ENCODE measurements at regions of chr1 and their contacts with region 1.

Region 1: GRCh38 chr1:27111626-27112573 is 43.0 kb downstream of the SLC9A1 start:
- DNase-seq: peak; percentile 66
- ATAC-seq: peak; percentile 96
- H3K4me3 Mint-ChIP-seq: peak overlapping the region; percentile 59
- H3K27ac Mint-ChIP-seq: peak overlapping the region; percentile 94
- H3K4me1 Mint-ChIP-seq: peaks cover 60% of the 10 kb centered on the region
- H3K27me3 Mint-ChIP-seq: no peaks in the 10 kb centered on the region

Region 2: DNA sequence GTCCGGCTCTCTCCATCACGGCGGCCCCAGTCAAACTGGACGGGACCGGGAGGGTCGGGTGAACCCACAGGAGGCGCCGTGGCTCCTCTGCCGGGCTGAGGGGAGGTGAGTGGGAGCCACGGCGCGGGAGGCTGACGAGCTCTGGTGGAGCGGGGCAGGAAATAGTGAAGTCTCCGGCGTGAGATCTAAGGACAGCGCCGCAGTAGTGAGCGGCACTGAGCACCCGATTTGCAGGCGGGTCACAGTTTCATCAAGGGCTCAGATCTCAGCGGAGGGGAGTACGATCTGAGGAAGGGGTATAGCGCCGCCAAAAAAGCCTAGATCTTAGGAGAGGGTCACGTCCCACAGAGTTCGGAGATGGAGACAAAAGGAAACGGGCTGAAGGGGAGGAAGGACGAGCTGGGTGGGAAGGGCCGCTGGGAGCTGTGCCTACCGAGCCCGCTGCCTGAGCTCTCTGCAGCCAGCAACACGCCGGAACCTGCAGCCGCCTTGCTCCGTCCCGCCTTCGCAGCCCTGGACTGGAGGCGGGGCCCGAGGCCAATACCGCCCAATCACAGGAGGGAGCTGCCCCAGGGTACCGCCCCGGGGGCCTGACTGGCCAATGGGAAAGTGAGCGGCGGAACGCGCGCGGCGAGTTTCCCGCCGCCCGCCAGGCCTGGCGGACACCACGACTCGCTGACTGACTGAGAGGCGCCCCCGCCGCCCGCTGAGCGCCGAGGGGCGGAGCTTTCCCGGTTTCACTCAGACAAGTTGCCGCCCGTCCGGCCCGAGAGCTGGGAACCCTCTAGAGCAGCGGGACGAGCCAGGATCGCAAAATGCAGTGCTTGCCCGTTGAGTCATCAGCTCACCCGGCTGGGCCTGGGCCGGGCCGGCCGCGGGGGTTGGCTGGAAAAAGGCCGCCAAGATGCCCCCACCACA is 247.0 kb before region 1 on chr1:
- POLR2A ChIA-PET with region 1: no interaction called
- DNase-seq: peak; percentile 97
- ATAC-seq: peak; percentile 93
- H3K4me3 Mint-ChIP-seq: peak overlapping the region; percentile 96
- H3K27ac Mint-ChIP-seq: peak overlapping the region; percentile 95
- H3K4me1 Mint-ChIP-seq: peaks cover 14% of the 10 kb centered on the region
- H3K27me3 Mint-ChIP-seq: no peaks in the 10 kb centered on the region

Region 3: DNA sequence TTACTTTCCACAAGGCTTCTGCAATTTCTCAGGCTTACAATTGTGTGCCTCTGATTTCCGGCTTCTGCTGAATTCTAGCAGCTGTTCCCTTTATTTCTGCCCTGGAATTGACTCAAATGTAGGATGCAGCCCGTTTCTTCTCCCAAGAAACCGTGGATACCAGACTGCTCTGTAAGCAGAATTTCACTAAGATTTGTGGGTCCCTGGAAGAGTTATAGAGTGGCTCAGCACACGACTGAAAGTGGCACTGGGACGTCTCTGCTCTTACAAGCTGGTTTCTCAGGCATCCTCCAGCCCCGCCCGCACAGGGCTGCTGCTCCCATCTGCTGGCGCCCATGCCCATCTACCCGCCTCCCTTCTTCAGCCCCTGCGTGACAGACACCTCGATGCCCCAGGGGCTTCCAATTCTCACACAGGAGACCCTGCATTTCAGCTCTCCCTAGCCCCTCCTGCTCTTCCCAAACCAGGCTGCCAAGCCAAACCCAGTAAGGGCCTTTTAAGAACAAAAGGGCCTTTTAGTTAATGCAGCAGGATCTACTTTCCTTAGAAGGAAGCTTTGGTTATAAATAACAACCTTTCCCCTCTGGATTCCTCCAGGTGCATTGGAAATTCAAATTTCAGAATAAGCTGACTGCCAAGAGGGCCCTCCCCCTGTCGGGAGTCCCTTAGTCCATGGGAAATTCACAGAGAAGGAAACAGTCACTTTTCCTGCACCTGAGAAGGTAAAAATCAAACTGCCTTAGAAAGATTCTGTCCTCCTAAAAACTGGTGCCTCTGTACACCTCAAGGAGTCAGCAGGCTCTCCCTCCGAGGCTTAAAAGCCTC is 53.9 kb before region 1 on chr1:
- POLR2A ChIA-PET with region 1: no interaction called
- DNase-seq: no peak
- ATAC-seq: no peak
- H3K4me3 Mint-ChIP-seq: no peak overlapping the region
- H3K27ac Mint-ChIP-seq: no peak overlapping the region
- H3K4me1 Mint-ChIP-seq: no peaks in the 10 kb centered on the region
- H3K27me3 Mint-ChIP-seq: no peaks in the 10 kb centered on the region

Region 4: DNA sequence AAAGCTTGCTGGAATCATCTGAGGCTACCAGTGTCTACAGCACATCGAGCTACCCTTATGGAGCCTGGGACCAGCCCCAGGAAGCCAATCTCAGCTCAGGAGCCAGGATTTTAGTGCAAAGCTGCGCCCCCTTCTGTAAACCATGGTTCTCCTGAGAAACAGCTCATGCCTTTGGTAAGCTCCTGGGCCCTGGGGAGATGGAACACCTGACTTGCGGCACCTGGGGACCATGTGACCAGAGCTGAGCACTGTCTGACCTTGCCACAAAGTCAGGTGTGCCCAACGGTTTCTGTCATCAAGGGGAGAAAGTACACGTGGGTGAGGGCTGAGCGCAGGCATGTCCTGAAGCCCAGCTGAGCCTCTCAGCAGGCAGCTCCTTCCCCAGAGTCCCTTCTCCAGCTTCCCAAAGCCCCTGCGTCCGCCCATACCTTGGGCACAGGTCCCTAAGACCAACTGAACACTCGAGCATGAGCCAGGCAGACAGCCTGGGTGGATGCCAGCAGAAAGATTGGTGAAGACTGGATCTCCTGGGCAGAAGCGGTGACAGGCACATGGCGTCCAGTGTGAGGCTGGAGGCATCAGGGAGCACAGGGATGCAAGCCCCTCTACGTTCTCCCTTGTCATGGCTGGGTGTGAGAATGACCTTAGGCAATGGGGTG is 41.4 kb before region 1 on chr1:
- POLR2A ChIA-PET with region 1: no interaction called
- DNase-seq: no peak
- ATAC-seq: no peak
- H3K4me3 Mint-ChIP-seq: no peak overlapping the region
- H3K27ac Mint-ChIP-seq: no peak overlapping the region
- H3K4me1 Mint-ChIP-seq: no peaks in the 10 kb centered on the region
- H3K27me3 Mint-ChIP-seq: no peaks in the 10 kb centered on the region

Region 5: GRCh38 chr1:27154991-27155781 is 43.3 kb after region 1 on chr1 and contains the start of gene SLC9A1:
- POLR2A ChIA-PET with region 1: interaction called, 79 read pairs
- DNase-seq: peak; percentile 96
- ATAC-seq: peak; percentile 90
- H3K4me3 Mint-ChIP-seq: peak within 1 kb of the TSS; percentile 96
- H3K27ac Mint-ChIP-seq: peak within 1 kb of the TSS; percentile 98
- H3K4me1 Mint-ChIP-seq: peaks cover 42% of the 10 kb centered on the region
- H3K27me3 Mint-ChIP-seq: no peaks in the 10 kb centered on the region
- total RNA-seq, gene SLC9A1: 23.7 to 24.5 TPM

Region 6: GRCh38 chr1:27321813-27322577 is 210.1 kb after region 1 on chr1 and contains the start of gene TMEM222:
- POLR2A ChIA-PET with region 1: no interaction called
- DNase-seq: peak; percentile 98
- ATAC-seq: peak; percentile 96
- H3K4me3 Mint-ChIP-seq: peak within 1 kb of the TSS; percentile 98
- H3K27ac Mint-ChIP-seq: peak within 1 kb of the TSS; percentile 89
- H3K4me1 Mint-ChIP-seq: peaks cover 26% of the 10 kb centered on the region
- H3K27me3 Mint-ChIP-seq: peaks cover 6% of the 10 kb centered on the region
- total RNA-seq, gene TMEM222: 35.8 to 40.4 TPM

Measured in activated naive CD8-positive, alpha-beta T cell treated with anti-CD3 and anti-CD28 coated beads, Interleukin-2, amount 10 ng/mL, durations not matched to agents 7 days and 5 days (primary cell).